ENCODE measurements at regions of chr22 and their contacts with region 1.

Region 1: GRCh38 chr22:50341977-50342650 is 1.0 kb upstream of the PPP6R2 start:
- DNase-seq: peak; percentile 81
- H3K4me3 ChIP-seq: peak overlapping the region; percentile 38 to 71 (median 71)
- H3K27ac ChIP-seq: peak overlapping the region; percentile 30
- H3K4me1 ChIP-seq: peaks cover 5% of the 10 kb centered on the region
- H3K27me3 ChIP-seq: no peaks in the 10 kb centered on the region
- CTCF ChIP-seq: peak; percentile 93 to 94
- POLR2A ChIP-seq: no peak

Region 2: DNA sequence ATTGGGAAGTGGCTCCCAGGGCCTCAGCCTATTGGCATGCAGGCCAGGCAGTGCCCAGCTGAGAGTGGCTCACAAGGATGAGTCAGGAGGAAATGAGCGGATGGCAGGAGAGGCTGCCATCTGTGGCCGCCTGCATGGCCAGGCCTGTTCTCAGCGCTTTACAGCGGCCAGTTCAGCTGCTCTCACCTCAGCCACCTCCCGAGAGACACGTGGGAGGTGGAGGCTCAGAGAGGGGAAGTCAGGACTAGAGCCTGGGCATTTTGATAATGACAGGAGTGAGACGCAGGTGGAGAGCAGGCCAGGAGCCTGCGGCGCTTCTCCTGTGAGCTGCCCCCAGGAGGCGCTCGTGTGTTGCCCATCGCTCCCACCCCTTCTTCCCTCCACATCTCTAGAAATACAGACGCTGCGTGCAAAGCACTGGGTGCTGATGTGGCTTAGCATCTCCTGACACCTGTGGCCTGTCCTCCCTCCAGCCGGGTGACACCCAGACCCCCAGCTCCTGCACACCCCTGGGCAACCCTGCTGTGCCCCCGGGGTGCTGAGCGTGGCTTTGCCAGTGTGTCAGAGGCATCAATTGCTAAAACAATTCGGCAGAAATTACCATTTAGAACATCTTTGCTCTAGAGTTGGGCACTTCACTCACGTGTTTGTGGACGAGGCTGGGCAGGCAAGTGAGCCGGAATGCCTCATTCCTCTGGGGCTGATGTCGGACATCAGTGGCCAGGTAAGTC is 193.0 kb before region 1 on chr22:
- CTCF ChIA-PET with region 1: no interaction called
- POLR2A ChIA-PET with region 1: no interaction called
- dilution Hi-C with region 1: no loop called
- intact Hi-C with region 1: loop called (anchors 2 kb)
- DNase-seq: peak; percentile 58
- H3K4me3 ChIP-seq: no peak overlapping the region
- H3K27ac ChIP-seq: no peak overlapping the region
- H3K4me1 ChIP-seq: no peaks in the 10 kb centered on the region
- H3K27me3 ChIP-seq: no peaks in the 10 kb centered on the region
- CTCF ChIP-seq: peak; percentile 77 to 88
- POLR2A ChIP-seq: no peak

Region 3: DNA sequence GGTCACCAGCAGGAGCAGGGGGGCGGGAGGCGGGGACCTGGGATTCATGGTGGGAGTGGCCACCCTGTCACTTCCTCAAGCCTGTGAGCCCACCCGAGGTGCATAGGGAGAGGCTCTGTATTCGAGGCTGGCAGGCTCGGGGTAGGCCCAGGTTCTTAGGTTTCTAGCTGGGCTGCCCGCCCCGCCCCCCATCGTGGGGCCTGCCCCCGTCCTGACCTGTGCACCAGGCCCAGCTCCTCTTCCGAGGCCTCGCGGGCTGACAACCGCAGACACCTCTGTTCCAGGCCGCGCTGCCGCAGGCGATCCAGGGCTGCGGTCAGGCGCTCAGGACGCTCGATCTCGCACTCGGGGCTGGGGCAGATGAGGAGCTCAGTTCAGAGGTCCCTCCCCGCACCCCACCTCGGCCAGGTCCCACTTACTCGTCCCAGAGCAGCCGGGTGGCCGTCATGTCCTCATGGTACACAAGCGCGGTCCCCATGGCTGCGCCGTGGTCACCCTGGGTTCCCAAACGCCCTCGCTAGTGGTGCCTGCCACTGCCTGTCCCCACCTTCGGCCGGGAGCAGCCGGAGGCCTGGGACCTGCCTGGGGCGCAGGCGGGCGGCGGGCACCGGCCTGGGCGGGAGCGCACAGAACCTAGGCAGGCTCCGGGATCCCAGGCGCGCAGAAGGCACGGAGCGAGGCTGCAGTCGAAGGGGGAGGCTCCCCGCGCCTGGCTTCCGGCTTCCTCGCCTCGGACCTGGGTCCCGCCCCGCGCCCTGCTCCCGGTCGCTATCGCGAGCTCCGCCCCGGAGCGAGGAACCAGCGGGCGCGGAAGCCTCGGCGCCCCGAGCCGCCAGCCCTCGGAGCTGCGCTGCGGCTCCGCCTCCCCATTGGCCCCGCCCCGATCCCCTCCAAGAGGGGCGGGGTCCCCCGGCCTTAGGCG is 91.3 kb before region 1 on chr22 and contains the start of gene HDAC10:
- CTCF ChIA-PET with region 1: interaction called, 60 read pairs
- POLR2A ChIA-PET with region 1: no interaction called
- dilution Hi-C with region 1: no loop called
- intact Hi-C with region 1: loop called (anchors 1 kb)
- DNase-seq: peak; percentile 76
- H3K4me3 ChIP-seq: peak within 1 kb of the TSS; percentile 73 to 74 (median 74)
- H3K27ac ChIP-seq: peak within 1 kb of the TSS; percentile 26
- H3K4me1 ChIP-seq: peaks cover 13% of the 10 kb centered on the region
- H3K27me3 ChIP-seq: no peaks in the 10 kb centered on the region
- CTCF ChIP-seq: no peak
- POLR2A ChIP-seq: peak; percentile 68
- total RNA-seq, gene HDAC10: 42.4 and 47.0 TPM in 2 replicates

Region 4: DNA sequence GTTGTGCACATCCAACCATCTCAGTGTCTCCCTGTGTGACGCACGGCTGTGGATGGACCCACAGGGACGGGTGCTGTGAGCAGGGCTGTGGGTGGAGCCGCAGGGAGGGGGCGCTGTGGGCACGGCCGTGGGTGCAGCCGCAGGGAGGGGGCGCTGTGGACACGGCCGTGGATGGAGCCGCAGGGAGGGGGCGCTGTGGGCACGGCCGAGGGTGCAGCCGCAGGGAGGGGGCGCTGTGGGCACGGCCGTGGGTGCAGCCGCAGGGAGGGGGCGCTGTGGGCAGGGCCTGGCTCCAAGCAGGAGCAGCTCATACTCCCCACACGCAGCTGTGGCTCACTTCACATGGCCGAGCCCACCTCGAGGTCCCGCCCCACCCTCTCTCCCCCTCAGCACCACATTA is 66.0 kb before region 1 on chr22:
- CTCF ChIA-PET with region 1: interaction called, 10 read pairs
- POLR2A ChIA-PET with region 1: no interaction called
- dilution Hi-C with region 1: no loop called
- intact Hi-C with region 1: no loop called
- DNase-seq: peak; percentile 43
- H3K4me3 ChIP-seq: no peak overlapping the region
- H3K27ac ChIP-seq: no peak overlapping the region
- H3K4me1 ChIP-seq: peaks cover 6% of the 10 kb centered on the region
- H3K27me3 ChIP-seq: no peaks in the 10 kb centered on the region
- CTCF ChIP-seq: peak; percentile 38 to 50
- POLR2A ChIP-seq: no peak

Region 5: GRCh38 chr22:50306753-50307749 is 35.1 kb before region 1 on chr22 and contains the start of gene PLXNB2:
- CTCF ChIA-PET with region 1: interaction called, 14 read pairs
- POLR2A ChIA-PET with region 1: no interaction called
- dilution Hi-C with region 1: no loop called
- intact Hi-C with region 1: loop called (anchors 5 kb)
- DNase-seq: peak; percentile 76
- H3K4me3 ChIP-seq: peak within 1 kb of the TSS; percentile 72 to 95 (median 83)
- H3K27ac ChIP-seq: peak within 1 kb of the TSS; percentile 79
- H3K4me1 ChIP-seq: peaks cover 27% of the 10 kb centered on the region
- H3K27me3 ChIP-seq: no peaks in the 10 kb centered on the region
- CTCF ChIP-seq: no peak
- POLR2A ChIP-seq: peak; percentile 79
- total RNA-seq, gene PLXNB2: 134 and 139 TPM in 2 replicates

Region 6: GRCh38 chr22:50507991-50508884 is 166.1 kb after region 1 on chr22 and contains the start of gene NCAPH2:
- CTCF ChIA-PET with region 1: no interaction called
- POLR2A ChIA-PET with region 1: no interaction called
- dilution Hi-C with region 1: no loop called
- intact Hi-C with region 1: no loop called
- DNase-seq: peak; percentile 97
- H3K4me3 ChIP-seq: peak within 1 kb of the TSS; percentile 68 to 98 (median 79)
- H3K27ac ChIP-seq: peak within 1 kb of the TSS; percentile 72
- H3K4me1 ChIP-seq: peaks cover 14% of the 10 kb centered on the region
- H3K27me3 ChIP-seq: no peaks in the 10 kb centered on the region
- CTCF ChIP-seq: no peak
- POLR2A ChIP-seq: peak; percentile 75
- total RNA-seq, gene NCAPH2: 42.4 and 43.1 TPM in 2 replicates